Lower leg skin (tissue), 4 donors: ENCODE measurements at regions of chr15 and their contacts with region 1.

Region 1: DNA sequence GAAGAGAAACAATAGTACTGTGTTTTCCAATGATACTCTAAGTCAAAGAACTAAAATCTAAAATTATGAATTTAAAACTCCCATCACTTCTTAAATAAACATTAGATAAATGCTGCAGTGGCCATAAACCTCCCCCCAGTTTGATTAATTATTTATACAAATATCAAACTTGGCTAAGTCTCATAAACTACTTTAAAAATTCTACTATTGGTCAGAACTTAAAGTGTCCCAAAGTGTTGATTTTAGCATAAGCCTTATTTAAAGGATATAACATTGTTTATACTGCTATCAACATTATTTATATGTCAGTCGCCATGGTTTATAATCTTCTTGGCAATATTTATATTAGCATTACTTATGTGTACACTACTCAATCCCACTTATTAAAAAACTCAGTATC is 132.4 kb downstream of the SCAPER start:
- DNase-seq: no peak
- H3K4me3 ChIP-seq: no peak overlapping the region
- CTCF ChIP-seq: no peak
- POLR2A ChIP-seq: no peak

Region 2: DNA sequence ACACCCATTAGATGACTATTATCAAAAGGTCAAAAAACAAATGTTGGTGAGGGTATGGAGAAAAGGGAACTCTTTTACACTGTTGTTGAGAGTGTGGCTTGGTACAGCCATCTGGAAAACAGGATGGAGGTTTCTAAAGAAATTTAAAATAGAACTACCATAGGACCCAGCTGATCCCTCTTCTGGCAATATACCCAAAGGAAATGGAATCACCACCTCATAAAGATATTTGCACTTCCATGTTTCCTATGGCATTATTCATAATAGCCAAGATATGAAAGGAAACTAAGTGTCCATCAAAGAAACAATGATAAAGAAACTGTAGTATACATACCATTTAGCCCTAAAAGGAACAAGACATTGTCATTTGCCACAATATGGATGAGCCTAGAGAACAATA is 53.9 kb before region 1 on chr15:
- intact Hi-C with region 1: loop called (anchors 2 kb)
- DNase-seq: no peak
- H3K4me3 ChIP-seq: no peak overlapping the region
- CTCF ChIP-seq: no peak
- POLR2A ChIP-seq: no peak

Region 3: GRCh38 chr15:76954744-76955143 is 182.0 kb after region 1 on chr15:
- intact Hi-C with region 1: no loop called
- DNase-seq: no peak
- H3K4me3 ChIP-seq: no peak overlapping the region
- CTCF ChIP-seq: no peak
- POLR2A ChIP-seq: no peak